Gastrocnemius medialis (tissue), 4 donors: ENCODE measurements at regions of chr3 and their contacts with region 1.

Region 1: DNA sequence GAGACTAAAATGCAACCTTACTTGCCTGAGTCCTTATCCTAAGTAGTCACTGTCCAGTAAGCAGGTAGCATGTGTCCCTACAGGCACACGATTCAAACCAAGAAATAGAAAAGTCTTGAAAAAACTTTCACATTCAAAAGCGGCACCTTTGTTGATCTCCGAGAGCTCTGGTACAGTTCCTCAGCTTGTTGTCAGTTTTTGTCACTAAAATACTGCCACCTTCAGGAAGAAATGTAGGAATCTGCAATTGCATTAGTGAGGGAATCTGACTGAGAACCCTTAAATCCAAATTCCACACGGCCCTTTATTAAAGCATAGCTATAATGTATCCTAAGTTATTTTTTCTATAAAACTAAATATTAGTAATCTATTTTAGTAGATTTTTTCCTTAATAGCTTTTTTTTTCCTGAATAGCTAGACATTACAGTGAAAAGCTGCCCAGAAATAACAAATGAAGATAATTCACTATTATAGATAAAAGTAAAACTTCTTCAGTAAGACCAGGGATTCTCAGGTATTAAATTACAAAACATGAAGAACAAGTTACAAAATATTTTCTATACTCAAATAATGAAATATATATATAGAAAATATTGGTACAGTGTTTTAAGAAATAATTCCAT is 44.0 kb downstream of the CCDC54 start:
- DNase-seq: no peak
- ATAC-seq: peak; percentile 68 to 74
- H3K4me3 ChIP-seq: peak overlapping the region; percentile 21 to 55 (median 34)
- H3K27ac ChIP-seq: no peak overlapping the region
- H3K4me1 ChIP-seq: no peaks in the 10 kb centered on the region
- H3K27me3 ChIP-seq: no peaks in the 10 kb centered on the region
- CTCF ChIP-seq: peak; percentile 29 to 74 (median 47)
- POLR2A ChIP-seq: no peak

Region 2: DNA sequence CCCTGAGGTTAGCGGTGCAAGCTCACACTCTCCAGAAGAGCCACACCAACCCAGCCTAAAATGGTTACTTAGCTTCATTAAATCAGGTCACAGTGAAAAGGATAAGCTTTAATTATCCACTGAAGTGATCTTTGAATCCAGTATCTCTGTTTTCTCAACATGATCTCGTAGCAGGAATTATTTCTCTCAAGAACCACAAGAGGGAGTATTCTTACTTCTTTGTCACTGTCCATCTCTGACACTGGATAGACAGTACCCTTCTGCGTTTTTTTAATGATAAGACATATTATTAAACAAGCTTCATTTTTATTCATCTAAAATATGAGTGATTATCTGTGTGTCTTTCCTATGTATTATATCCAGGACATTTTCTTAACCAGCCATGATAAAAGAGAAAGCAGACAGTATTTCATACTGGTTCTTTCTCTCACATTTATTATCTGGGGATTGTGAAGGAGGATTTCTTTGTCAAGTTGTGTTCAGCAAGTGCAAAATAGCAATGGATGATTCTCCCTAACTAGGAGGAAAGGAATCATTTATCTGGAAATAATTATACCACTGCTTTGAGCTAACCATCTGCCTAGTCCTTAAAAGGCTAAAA is 149.4 kb before region 1 on chr3:
- in situ Hi-C with region 1: loop called in 1 of 4 experiments (anchors 10 kb)
- intact Hi-C with region 1: loop called (anchors 2 kb)
- DNase-seq: no peak
- ATAC-seq: peak; percentile 58 to 65
- H3K4me3 ChIP-seq: no peak overlapping the region
- H3K27ac ChIP-seq: no peak overlapping the region
- H3K4me1 ChIP-seq: no peaks in the 10 kb centered on the region
- H3K27me3 ChIP-seq: no peaks in the 10 kb centered on the region
- CTCF ChIP-seq: peak; percentile 39 to 60 (median 43)
- POLR2A ChIP-seq: no peak